HepG2 (cell line): ENCODE measurements at regions of chr12 and their contacts with region 1.

Region 1: GRCh38 chr12:124940549-124941527 is 26.4 kb upstream of the UBC start:
- DNase-seq: peak; percentile 84
- ATAC-seq: peak; percentile 75
- H3K4me3 ChIP-seq: peak overlapping the region; percentile 42 to 81 (median 59)
- H3K27ac ChIP-seq: peak overlapping the region; percentile 95
- H3K4me1 ChIP-seq: peaks cover 50% of the 10 kb centered on the region
- H3K27me3 ChIP-seq: no peaks in the 10 kb centered on the region
- CTCF ChIP-seq: peak; percentile 94
- EP300 ChIP-seq: no peak
- POLR2A ChIP-seq: peak in 1 of 2 experiments; percentile 69; a peak in 2 of 4 replicates
- RAD21 ChIP-seq: peak; percentile 17; the same call in 1 of the 2 replicates

Region 2: DNA sequence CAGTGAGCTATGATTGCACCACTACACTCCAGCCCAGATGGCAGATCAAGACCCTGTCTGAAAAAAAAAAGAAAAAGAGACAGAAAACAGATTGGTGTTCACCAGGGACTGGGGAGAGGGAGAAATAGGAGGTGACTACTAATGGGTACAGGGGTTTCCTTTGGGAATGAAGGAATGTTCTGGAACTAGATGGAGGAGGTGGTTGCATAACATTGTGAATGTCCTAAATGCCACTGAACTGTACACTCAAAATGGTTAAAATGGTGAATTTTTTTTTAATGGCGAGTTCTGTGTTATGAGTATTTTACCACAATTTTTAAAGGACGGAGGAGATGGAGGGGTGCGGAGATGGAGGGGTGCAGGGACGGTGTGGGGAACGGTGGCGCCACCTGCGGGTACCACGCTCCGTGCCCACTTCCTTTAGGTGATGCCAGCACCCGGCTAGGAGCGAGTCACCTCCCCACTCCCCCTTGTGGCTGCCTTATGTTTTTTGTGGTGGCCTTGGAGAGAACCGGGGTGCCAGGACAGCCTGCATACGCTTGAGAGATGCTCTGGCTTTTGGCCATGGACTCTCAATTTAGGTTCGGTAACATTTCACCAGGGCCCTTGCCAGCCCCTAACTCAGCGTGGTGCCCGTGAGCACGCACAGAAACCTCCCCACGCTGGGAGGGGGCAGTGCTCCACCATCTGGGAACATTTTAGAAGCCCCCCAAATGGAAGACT is 42.5 kb before region 1 on chr12:
- CTCF ChIA-PET with region 1: no interaction called
- POLR2A ChIA-PET with region 1: interaction called, 14 read pairs
- in situ Hi-C with region 1: no loop called
- intact Hi-C with region 1: no loop called
- DNase-seq: peak; percentile 63
- ATAC-seq: peak; percentile 60
- H3K4me3 ChIP-seq: no peak overlapping the region
- H3K27ac ChIP-seq: no peak overlapping the region
- H3K4me1 ChIP-seq: peaks cover 85% of the 10 kb centered on the region
- H3K27me3 ChIP-seq: no peaks in the 10 kb centered on the region
- CTCF ChIP-seq: peak; percentile 85
- EP300 ChIP-seq: no peak
- POLR2A ChIP-seq: no peak
- RAD21 ChIP-seq: peak; percentile 88

Region 3: DNA sequence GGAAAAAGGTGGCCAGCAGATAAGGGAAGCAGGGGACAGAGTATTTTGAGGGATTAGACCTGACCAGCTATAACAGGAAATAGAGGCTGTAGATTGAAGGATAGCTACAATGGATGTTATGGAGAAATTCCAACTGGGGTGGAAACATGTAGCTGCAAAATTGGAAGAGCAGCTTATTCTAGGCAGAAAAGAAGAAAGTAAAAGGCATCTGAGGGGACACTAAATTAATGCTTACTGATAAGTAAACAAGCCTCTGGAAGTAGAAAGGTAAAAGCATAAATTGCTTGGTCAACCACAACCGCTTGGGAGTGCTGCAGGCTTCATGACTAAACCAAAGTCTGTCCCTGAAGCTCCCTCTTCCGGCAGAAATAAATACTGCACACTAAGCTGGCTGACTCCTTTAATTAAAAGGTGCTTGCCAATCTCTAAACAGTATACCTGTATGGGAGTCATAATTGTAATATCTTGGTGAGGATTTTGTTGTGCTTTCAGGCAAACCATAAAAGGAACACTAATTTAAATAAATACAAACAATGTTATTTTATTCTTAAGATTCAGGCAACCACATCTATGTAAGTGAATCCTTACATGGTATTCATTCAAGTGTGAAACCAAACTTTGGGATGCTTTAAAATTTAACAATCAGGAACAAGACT is 34.1 kb before region 1 on chr12:
- CTCF ChIA-PET with region 1: interaction called, 21 read pairs
- POLR2A ChIA-PET with region 1: interaction called, 32 read pairs
- in situ Hi-C with region 1: no loop called
- intact Hi-C with region 1: loop called (anchors 1 kb)
- DNase-seq: peak; percentile 93
- ATAC-seq: peak; percentile 51
- H3K4me3 ChIP-seq: no peak overlapping the region
- H3K27ac ChIP-seq: no peak overlapping the region
- H3K4me1 ChIP-seq: peaks cover 69% of the 10 kb centered on the region
- H3K27me3 ChIP-seq: no peaks in the 10 kb centered on the region
- CTCF ChIP-seq: peak; percentile 91
- EP300 ChIP-seq: no peak
- POLR2A ChIP-seq: peak in 1 of 2 experiments; percentile 47; a peak in 1 of 4 replicates
- RAD21 ChIP-seq: peak; percentile 90

Region 4: DNA sequence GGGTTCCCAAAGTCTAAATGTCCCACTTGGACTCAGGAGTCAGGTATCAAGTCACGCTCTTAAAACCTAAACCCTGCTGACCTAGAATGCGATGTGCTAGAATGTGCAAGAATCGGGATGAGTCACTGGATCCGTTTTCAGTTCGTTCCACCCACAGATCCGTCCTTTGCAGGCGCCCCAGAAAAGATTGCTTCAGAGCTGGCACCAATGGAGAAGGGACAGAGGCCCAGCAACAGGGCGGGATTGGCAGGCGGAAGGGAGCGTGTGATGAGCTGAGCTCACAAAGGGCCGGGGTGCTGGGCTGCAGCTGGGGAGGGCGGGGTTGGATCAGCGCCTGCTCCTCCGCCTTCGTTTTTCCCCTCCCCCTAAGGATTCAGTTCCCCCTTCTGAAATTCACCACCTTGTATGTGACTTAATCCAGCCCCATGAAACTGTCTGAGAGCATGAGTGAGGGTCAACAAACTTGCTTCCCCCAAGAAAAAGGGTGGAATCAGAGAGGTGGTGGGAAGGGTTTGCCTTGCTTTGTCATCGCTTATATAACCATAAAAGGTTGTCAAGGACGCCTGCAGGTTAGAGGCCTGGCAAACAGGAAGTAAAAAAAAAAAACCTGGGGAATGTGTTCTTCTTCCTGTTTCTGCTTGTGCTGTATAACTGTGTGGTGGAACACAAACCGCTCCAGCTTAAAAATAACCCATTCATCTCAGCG is 23.6 kb before region 1 on chr12:
- CTCF ChIA-PET with region 1: no interaction called
- POLR2A ChIA-PET with region 1: interaction called, 199 read pairs
- in situ Hi-C with region 1: no loop called
- intact Hi-C with region 1: loop called (anchors 2 kb)
- DNase-seq: peak; percentile 99
- ATAC-seq: peak; percentile 81
- H3K4me3 ChIP-seq: peak overlapping the region; percentile 53 to 99 (median 86)
- H3K27ac ChIP-seq: peak overlapping the region; percentile 100
- H3K4me1 ChIP-seq: peaks cover 50% of the 10 kb centered on the region
- H3K27me3 ChIP-seq: no peaks in the 10 kb centered on the region; a peak in 1 of 5 replicates
- CTCF ChIP-seq: no peak
- EP300 ChIP-seq: peak; percentile 92 to 96
- POLR2A ChIP-seq: peak; percentile 54 to 65; a peak in 3 of 4 replicates
- RAD21 ChIP-seq: peak; percentile 9; the same call in 1 of the 2 replicates

Region 5: DNA sequence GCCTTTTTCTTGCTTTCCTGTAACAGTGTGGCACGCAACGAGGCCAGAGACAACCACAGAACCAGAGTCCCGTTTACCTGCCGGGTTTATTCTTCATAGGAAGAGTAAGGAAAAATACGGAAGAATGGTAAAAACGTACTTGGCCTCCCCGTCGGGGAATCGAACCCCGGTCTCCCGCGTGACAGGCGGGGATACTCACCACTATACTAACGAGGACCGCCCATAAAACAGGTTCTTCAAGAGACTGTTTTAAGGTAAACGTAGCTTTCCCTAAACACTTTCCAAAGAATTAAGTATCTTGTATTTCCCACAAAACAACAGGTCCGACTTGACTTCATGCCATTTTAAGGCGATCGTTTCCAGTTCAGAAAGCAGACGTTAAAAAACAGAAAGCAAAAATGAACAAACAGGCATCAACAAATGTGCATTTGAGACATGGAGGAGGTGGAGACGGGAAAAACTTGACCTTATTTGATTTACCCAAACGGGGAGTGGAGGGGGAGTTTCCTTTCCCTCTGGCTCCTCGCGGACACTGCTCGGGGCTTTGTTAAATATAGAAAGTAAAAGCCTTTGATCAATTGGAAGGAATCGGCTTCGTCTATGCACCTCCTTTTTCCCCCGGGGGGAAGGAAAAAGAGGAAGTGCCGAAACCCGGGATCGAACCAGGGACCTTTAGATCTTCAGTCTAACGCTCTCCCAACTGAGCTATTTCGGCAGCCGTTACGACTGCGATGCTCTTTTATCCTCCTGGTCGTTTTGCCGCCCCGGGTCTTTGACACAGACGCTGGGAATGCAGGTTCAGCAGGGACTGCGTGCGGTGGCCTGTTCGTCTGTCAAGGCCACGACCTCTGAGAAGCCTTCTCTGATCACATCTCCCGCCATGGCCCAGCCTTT is 13.4 kb before region 1 on chr12:
- CTCF ChIA-PET with region 1: no interaction called
- POLR2A ChIA-PET with region 1: interaction called, 199 read pairs
- in situ Hi-C with region 1: no loop called
- intact Hi-C with region 1: loop called (anchors 1 kb)
- DNase-seq: peak; percentile 85
- ATAC-seq: peak; percentile 66
- H3K4me3 ChIP-seq: peak overlapping the region; percentile 80 to 98 (median 93)
- H3K27ac ChIP-seq: peak overlapping the region; percentile 77
- H3K4me1 ChIP-seq: peaks cover 42% of the 10 kb centered on the region
- H3K27me3 ChIP-seq: no peaks in the 10 kb centered on the region; a peak in 1 of 5 replicates
- CTCF ChIP-seq: no peak
- EP300 ChIP-seq: 0 out of 4 replicates have a peak, but pooled peaks of 1 of the 2 experiments have one; percentile 20
- POLR2A ChIP-seq: no peak
- RAD21 ChIP-seq: 0 out of 2 replicates have a peak, but pooled peaks have one; percentile 20